ENCODE measurements at regions of chr18 and their contacts with region 1.

Region 1: DNA sequence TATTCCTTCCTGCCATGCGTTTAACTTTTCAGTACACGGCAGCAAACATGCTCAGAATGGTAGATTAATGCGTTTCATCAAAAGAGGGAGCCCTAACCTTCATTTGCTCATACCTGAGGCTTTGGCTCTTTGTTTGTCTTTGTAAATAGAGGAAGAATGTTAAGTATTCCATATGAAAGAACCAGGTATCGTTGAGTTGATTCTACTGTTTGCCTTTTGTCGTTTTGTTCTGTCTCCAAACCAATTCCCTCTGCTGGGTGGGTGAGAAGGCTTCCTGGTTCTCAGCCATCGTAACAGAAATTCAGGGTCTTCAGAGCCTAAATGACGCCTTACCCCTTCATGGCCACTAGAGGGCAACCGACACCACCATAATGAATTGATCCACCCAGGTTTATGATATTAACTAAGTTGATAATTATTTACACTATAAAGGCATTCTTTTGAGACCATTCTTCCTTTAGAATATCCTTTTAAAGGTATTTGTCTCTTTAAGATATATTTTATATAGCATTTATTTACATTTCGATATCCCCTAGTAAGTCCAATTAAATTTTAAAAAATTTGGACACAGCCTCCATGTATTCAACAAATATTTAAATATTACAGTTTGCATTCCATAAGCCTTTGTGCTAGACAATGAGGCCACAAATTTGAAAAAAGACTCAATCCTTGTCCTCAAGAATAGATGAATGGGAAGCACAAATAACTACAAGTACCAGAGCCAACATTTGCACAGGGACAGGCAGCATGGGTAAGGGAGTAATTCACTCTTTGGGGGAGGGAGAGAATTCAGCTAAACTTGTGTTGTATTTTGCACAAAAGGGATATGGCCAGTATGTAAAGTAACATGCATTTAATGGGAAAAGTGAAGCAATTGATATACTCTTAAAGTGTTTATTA is 48.1 kb downstream of the TIMM21 start:
- DNase-seq: peak; percentile 8 to 86 (median 46)
- ATAC-seq: peak; percentile 98
- H3K4me3 ChIP-seq: peak overlapping the region; percentile 21 to 42
- H3K4me3 Mint-ChIP-seq: peak overlapping the region; percentile 79
- H3K27ac ChIP-seq: no peak overlapping the region
- H3K27ac Mint-ChIP-seq: peak overlapping the region; percentile 85
- H3K4me1 ChIP-seq: peaks cover 4% of the 10 kb centered on the region
- H3K4me1 Mint-ChIP-seq: peaks cover 6% of the 10 kb centered on the region
- H3K27me3 ChIP-seq: no peaks in the 10 kb centered on the region
- H3K27me3 Mint-ChIP-seq: peaks cover 18% of the 10 kb centered on the region
- CTCF ChIP-seq: peak; percentile 89

Region 2: GRCh38 chr18:74291771-74292540 is 95.5 kb after region 1 on chr18 and contains the start of gene CYB5A:
- CTCF ChIA-PET with region 1: no interaction called
- POLR2A ChIA-PET with region 1: no interaction called
- intact Hi-C with region 1: loop called in 1 of 2 experiments (anchors 5 kb)
- DNase-seq: peak; percentile 98 to 99 (median 99)
- ATAC-seq: peak; percentile 94
- H3K4me3 ChIP-seq: peak within 1 kb of the TSS; percentile 85 to 100
- H3K4me3 Mint-ChIP-seq: no peak within 1 kb of the TSS
- H3K27ac ChIP-seq: peak within 1 kb of the TSS; percentile 44 to 61
- H3K27ac Mint-ChIP-seq: peak within 1 kb of the TSS; percentile 86
- H3K4me1 ChIP-seq: peaks cover 8% of the 10 kb centered on the region
- H3K4me1 Mint-ChIP-seq: peaks cover 21% of the 10 kb centered on the region
- H3K27me3 ChIP-seq: no peaks in the 10 kb centered on the region
- H3K27me3 Mint-ChIP-seq: no peaks in the 10 kb centered on the region
- CTCF ChIP-seq: peak; percentile 4
- total RNA-seq, gene CYB5A: 4.4 to 5.9 TPM